HEK293 (cell line): ENCODE measurements at regions of chr19 and their contacts with region 1.

Region 1: GRCh38 chr19:29844891-29845572 is 33.2 kb downstream of the CCNE1 start:
- H3K4me3 ChIP-seq: peak overlapping the region; percentile 42
- H3K27ac ChIP-seq: peak overlapping the region; percentile 76
- H3K4me1 ChIP-seq: peaks cover 16% of the 10 kb centered on the region
- CTCF ChIP-seq: peak; percentile 80

Region 2: GRCh38 chr19:29779921-29780320 is 65.1 kb before region 1 on chr19:
- CTCF ChIA-PET with region 1: no interaction called
- POLR2A ChIA-PET with region 1: interaction called, 10 read pairs
- H3K4me3 ChIP-seq: no peak overlapping the region
- H3K27ac ChIP-seq: no peak overlapping the region
- H3K4me1 ChIP-seq: no peaks in the 10 kb centered on the region
- CTCF ChIP-seq: peak; percentile 50; the same call in 1 of the 2 replicates

Region 3: GRCh38 chr19:29806098-29806866 is 38.8 kb before region 1 on chr19:
- CTCF ChIA-PET with region 1: interaction called, 3 read pairs
- POLR2A ChIA-PET with region 1: interaction called, 18 read pairs
- H3K4me3 ChIP-seq: no peak overlapping the region
- H3K27ac ChIP-seq: no peak overlapping the region
- H3K4me1 ChIP-seq: peaks cover 6% of the 10 kb centered on the region
- CTCF ChIP-seq: no peak

Region 4: DNA sequence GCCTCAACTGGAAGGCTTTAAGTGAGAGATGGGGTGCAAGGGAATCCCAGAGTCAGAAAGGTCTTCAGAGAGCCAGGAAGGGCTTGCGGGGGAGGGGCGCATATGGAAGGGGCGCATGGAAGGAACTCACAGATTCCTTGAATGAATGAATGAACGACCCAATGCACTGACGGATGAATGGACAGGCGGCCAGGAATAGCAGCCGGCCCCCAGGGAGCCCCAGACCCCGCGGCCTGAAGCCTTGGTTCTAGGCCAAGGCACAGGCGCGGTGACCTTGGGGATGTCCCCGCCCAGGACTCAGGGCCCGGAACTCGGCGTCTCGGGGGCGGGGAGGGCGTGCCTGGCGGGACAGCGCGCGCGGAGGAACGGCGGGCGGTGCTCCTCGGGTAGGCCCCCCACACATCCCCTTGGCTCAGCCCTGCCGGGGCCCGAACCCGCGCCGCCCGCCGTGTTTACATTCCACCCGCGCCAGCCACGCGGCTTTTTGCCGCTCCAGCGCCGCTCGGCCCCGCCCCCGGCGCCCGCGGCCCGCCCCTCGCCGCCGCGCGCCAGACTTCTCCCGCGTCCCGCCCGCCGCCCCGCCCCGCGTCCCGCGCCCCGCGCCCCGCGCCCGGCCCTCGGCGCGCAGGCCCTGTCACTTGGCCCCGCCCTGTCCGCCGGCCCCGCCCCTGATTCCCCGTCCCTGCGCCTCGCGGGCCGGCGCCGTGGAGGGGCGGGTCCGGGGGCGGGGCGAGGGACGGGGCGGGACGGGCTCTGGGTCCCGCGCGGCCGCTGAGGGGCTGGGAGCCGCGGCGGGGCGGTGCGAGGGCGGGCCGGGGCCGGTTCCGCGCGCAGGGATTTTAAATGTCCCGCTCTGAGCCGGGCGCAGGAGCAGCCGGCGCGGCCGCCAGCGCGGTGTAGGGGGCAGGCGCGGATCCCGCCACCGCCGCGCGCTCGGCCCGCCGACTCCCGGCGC is 33.6 kb before region 1 on chr19 and contains the start of gene CCNE1:
- CTCF ChIA-PET with region 1: interaction called, 3 read pairs
- POLR2A ChIA-PET with region 1: interaction called, 28 read pairs
- H3K4me3 ChIP-seq: peak within 1 kb of the TSS; percentile 47
- H3K27ac ChIP-seq: peak within 1 kb of the TSS; percentile 93
- H3K4me1 ChIP-seq: peaks cover 11% of the 10 kb centered on the region
- CTCF ChIP-seq: no peak

Region 5: GRCh38 chr19:29819986-29820385 is 25.0 kb before region 1 on chr19:
- CTCF ChIA-PET with region 1: no interaction called
- POLR2A ChIA-PET with region 1: interaction called, 11 read pairs
- H3K4me3 ChIP-seq: no peak overlapping the region
- H3K27ac ChIP-seq: no peak overlapping the region
- H3K4me1 ChIP-seq: no peaks in the 10 kb centered on the region
- CTCF ChIP-seq: no peak

Region 6: DNA sequence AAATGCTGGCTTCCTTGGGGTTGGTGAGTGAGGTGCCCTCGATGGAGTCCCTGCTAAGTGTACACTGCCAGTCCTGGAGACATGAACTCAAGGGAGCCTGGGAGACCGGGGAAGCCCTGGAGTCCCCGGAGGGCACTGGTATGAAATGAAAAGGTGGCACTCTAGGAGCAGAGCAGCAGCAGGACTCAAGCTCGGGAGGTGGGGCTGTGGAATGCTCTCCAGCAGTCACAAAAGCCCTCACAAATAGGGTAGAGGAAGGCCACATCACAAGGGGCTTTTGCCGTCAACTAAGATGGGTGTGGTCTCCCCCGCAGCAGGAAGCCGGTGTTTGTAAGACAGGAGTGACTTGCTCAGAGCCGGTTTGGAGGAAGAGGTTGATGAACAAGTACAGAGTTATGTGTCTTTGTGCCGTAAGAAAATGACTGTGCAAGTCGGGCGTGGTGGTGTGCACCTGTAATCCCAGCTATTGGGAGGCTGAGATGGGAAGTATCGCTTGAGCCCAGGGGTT is 13.9 kb before region 1 on chr19:
- CTCF ChIA-PET with region 1: interaction called, 4 read pairs
- POLR2A ChIA-PET with region 1: interaction called, 13 read pairs
- H3K4me3 ChIP-seq: no peak overlapping the region
- H3K27ac ChIP-seq: no peak overlapping the region
- H3K4me1 ChIP-seq: no peaks in the 10 kb centered on the region; the same call in 1 of the 2 replicates
- CTCF ChIP-seq: no peak

Region 7: GRCh38 chr19:29858000-29858596 is 13.1 kb after region 1 on chr19:
- CTCF ChIA-PET with region 1: interaction called, 30 read pairs
- POLR2A ChIA-PET with region 1: interaction called, 12 read pairs
- H3K4me3 ChIP-seq: no peak overlapping the region
- H3K27ac ChIP-seq: no peak overlapping the region
- H3K4me1 ChIP-seq: peaks cover 10% of the 10 kb centered on the region
- CTCF ChIP-seq: peak; percentile 86

Region 8: GRCh38 chr19:29923653-29924052 is 78.6 kb after region 1 on chr19:
- CTCF ChIA-PET with region 1: no interaction called
- POLR2A ChIA-PET with region 1: no interaction called
- H3K4me3 ChIP-seq: no peak overlapping the region
- H3K27ac ChIP-seq: no peak overlapping the region
- H3K4me1 ChIP-seq: no peaks in the 10 kb centered on the region
- CTCF ChIP-seq: no peak; the same call in 1 of the 2 replicates

Region 9: GRCh38 chr19:30293051-30293785 is 448.2 kb after region 1 on chr19:
- CTCF ChIA-PET with region 1: no interaction called
- POLR2A ChIA-PET with region 1: no interaction called
- H3K4me3 ChIP-seq: no peak overlapping the region
- H3K27ac ChIP-seq: no peak overlapping the region
- H3K4me1 ChIP-seq: peaks cover 6% of the 10 kb centered on the region
- CTCF ChIP-seq: no peak